MCF 10A (cell line): ENCODE measurements at regions of chr1 and their contacts with region 1.

Region 1: GRCh38 chr1:220294846-220295301 is 22.6 kb upstream of the RAB3GAP2 start:
- DNase-seq: no peak
- H3K4me3 Mint-ChIP-seq: no peak overlapping the region
- H3K27ac Mint-ChIP-seq: no peak overlapping the region
- H3K4me1 Mint-ChIP-seq: peaks cover 5% of the 10 kb centered on the region
- H3K27me3 Mint-ChIP-seq: no peaks in the 10 kb centered on the region
- CTCF ChIP-seq: no peak

Region 2: DNA sequence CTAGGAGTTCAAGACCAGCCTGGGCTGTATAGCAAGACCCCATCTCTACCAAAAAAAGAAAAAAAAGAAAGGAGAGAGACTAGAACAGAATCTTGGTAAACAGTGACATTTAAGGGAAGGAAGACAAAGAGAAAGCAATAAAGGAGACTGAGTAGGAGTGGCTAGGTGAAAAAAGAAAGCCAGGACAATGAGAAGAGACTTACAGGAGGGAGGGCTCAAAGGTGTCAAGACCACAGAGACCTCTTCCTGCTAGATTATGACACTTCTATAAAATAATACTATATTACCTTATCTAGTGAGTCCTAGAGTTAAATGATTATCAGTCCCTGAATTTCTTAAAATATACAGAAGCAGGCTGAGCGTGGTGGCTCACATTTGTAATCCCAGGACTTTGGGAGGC is 238.5 kb before region 1 on chr1:
- CTCF ChIA-PET with region 1: no interaction called
- POLR2A ChIA-PET with region 1: no interaction called
- intact Hi-C with region 1: no loop called
- DNase-seq: no peak
- H3K4me3 Mint-ChIP-seq: no peak overlapping the region
- H3K27ac Mint-ChIP-seq: no peak overlapping the region
- H3K4me1 Mint-ChIP-seq: no peaks in the 10 kb centered on the region
- H3K27me3 Mint-ChIP-seq: no peaks in the 10 kb centered on the region
- CTCF ChIP-seq: no peak

Region 3: DNA sequence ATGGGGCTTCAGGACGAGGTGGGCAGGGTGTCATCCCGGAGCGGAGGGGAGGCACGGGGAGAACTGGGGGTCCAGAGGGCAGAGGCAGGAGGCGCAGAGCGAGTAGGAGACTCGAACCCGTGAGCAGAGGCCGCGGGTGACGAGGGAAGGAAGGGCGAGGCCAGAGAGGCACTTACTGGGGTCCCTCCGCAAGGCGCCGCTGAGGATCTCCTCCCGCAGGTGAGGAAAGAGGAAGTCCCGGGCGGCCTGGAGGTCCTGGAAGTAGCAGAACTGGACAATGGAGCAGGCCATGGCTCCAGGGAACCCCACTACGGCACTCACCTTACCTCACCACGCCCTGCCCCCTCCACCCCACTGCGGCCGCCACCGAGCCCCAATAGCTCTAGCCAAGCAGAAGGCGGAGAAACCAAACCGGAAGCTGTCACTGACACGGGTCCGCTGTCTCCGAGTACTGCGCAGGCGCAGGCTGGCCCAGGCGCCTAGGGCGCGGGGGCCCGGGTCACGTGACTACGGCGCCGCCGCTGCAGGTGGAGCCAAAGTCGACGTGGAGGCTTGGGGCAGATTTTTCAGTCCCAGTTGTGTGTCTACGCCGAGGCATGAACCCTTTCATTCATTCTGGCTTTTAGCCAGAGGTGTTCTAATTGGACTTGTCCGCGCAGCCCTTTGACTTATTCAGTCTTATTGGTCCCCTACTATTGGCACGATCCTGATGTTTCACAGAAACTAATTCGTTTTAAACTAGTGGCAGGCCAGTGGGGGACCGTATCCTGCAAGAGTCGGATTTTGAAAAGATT is 22.6 kb before region 1 on chr1 and contains the start of gene RAB3GAP2:
- CTCF ChIA-PET with region 1: interaction called, 158 read pairs
- POLR2A ChIA-PET with region 1: interaction called, 11 read pairs
- intact Hi-C with region 1: no loop called
- DNase-seq: peak; percentile 99
- H3K4me3 Mint-ChIP-seq: no peak within 1 kb of the TSS
- H3K27ac Mint-ChIP-seq: no peak within 1 kb of the TSS
- H3K4me1 Mint-ChIP-seq: peaks cover 11% of the 10 kb centered on the region
- H3K27me3 Mint-ChIP-seq: peaks cover 18% of the 10 kb centered on the region
- CTCF ChIP-seq: no peak
- total RNA-seq, gene RAB3GAP2: 93.3 and 97.6 TPM in 2 replicates

Region 4: DNA sequence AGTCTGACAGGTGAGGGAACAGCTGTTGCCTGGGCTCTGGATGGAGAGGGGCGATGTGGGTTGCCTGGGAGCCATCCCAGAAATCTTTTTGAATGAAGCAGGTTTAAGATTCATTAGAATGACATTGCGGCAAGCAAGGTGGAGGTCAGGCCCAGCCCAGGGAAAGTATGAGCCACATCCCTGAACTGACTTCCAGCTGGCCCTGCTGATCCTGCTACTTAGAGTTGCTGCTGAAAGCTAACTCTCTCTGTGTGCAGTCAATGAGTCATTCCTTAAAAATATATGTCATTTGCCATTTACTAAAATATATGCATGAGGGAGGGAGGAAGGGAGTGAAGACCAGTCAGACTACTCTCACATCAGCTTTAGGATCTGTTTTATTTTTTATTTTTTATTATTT is 31.7 kb after region 1 on chr1:
- CTCF ChIA-PET with region 1: interaction called, 12 read pairs
- POLR2A ChIA-PET with region 1: interaction called, 17 read pairs
- intact Hi-C with region 1: no loop called
- DNase-seq: peak; percentile 57
- H3K4me3 Mint-ChIP-seq: no peak overlapping the region
- H3K27ac Mint-ChIP-seq: peak overlapping the region; percentile 11
- H3K4me1 Mint-ChIP-seq: peaks cover 8% of the 10 kb centered on the region
- H3K27me3 Mint-ChIP-seq: no peaks in the 10 kb centered on the region
- CTCF ChIP-seq: no peak

Region 5: GRCh38 chr1:220347654-220348175 is 52.8 kb after region 1 on chr1:
- CTCF ChIA-PET with region 1: interaction called, 21 read pairs
- POLR2A ChIA-PET with region 1: interaction called, 5 read pairs
- intact Hi-C with region 1: no loop called
- DNase-seq: peak; percentile 84
- H3K4me3 Mint-ChIP-seq: no peak overlapping the region
- H3K27ac Mint-ChIP-seq: no peak overlapping the region
- H3K4me1 Mint-ChIP-seq: peaks cover 21% of the 10 kb centered on the region
- H3K27me3 Mint-ChIP-seq: no peaks in the 10 kb centered on the region
- CTCF ChIP-seq: no peak

Region 6: GRCh38 chr1:220432425-220432824 is 137.6 kb after region 1 on chr1:
- CTCF ChIA-PET with region 1: interaction called, 12 read pairs
- POLR2A ChIA-PET with region 1: interaction called, 7 read pairs
- intact Hi-C with region 1: no loop called
- DNase-seq: peak; percentile 59
- H3K4me3 Mint-ChIP-seq: no peak overlapping the region
- H3K27ac Mint-ChIP-seq: no peak overlapping the region
- H3K4me1 Mint-ChIP-seq: peaks cover 16% of the 10 kb centered on the region
- H3K27me3 Mint-ChIP-seq: no peaks in the 10 kb centered on the region
- CTCF ChIP-seq: no peak

Region 7: GRCh38 chr1:220527908-220528678 is 233.2 kb after region 1 on chr1 and contains the start of gene MARK1:
- CTCF ChIA-PET with region 1: interaction called, 18 read pairs
- POLR2A ChIA-PET with region 1: interaction called, 7 read pairs
- intact Hi-C with region 1: loop called (anchors 1 kb)
- DNase-seq: peak; percentile 76
- H3K4me3 Mint-ChIP-seq: peak within 1 kb of the TSS; percentile 76
- H3K27ac Mint-ChIP-seq: peak within 1 kb of the TSS; percentile 66
- H3K4me1 Mint-ChIP-seq: peaks cover 21% of the 10 kb centered on the region
- H3K27me3 Mint-ChIP-seq: no peaks in the 10 kb centered on the region
- CTCF ChIP-seq: no peak
- total RNA-seq, gene MARK1: 7.5 and 12.9 TPM in 2 replicates

Region 8: GRCh38 chr1:220680085-220680687 is 385.3 kb after region 1 on chr1:
- CTCF ChIA-PET with region 1: interaction called, 19 read pairs
- POLR2A ChIA-PET with region 1: no interaction called
- intact Hi-C with region 1: loop called (anchors 1 kb)
- DNase-seq: peak; percentile 75
- H3K4me3 Mint-ChIP-seq: no peak overlapping the region
- H3K27ac Mint-ChIP-seq: no peak overlapping the region
- H3K4me1 Mint-ChIP-seq: peaks cover 7% of the 10 kb centered on the region
- H3K27me3 Mint-ChIP-seq: no peaks in the 10 kb centered on the region
- CTCF ChIP-seq: peak; percentile 95